ENCODE measurements at regions of chr12 and their contacts with region 1.

Region 1: GRCh38 chr12:116708826-116709756 is 28.8 kb downstream of the SPRING1 start:
- DNase-seq: no peak
- H3K4me3 ChIP-seq: no peak overlapping the region
- H3K27ac ChIP-seq: no peak overlapping the region
- H3K4me1 ChIP-seq: peaks cover 0 to 14% (median 12%) of the 10 kb centered on the region in 4 donors
- H3K27me3 ChIP-seq: peaks cover 0 to 10% (median 0%) of the 10 kb centered on the region in 3 donors
- CTCF ChIP-seq: peak in 3 of 4 experiments; percentile 24 to 42 (median 35)
- EP300 ChIP-seq: no peak
- POLR2A ChIP-seq: no peak

Region 2: GRCh38 chr12:115998119-115998633 is 710.9 kb before region 1 on chr12:
- intact Hi-C with region 1: loop called (anchors 5 kb)
- DNase-seq: no peak
- H3K4me3 ChIP-seq: no peak overlapping the region
- H3K27ac ChIP-seq: peak overlapping the region in 3 of 4 donors; percentile 49 to 59 (median 59)
- H3K4me1 ChIP-seq: peaks cover 0 to 23% (median 16%) of the 10 kb centered on the region in 4 donors
- H3K27me3 ChIP-seq: no peaks in the 10 kb centered on the region
- CTCF ChIP-seq: peak; percentile 52 to 88 (median 70)
- EP300 ChIP-seq: no peak
- POLR2A ChIP-seq: no peak

Region 3: GRCh38 chr12:116784238-116784612 is 75.1 kb after region 1 on chr12:
- intact Hi-C with region 1: no loop called
- DNase-seq: no peak
- H3K4me3 ChIP-seq: no peak overlapping the region
- H3K27ac ChIP-seq: no peak overlapping the region
- H3K4me1 ChIP-seq: no peaks in the 10 kb centered on the region
- H3K27me3 ChIP-seq: no peaks in the 10 kb centered on the region
- CTCF ChIP-seq: no peak
- EP300 ChIP-seq: no peak
- POLR2A ChIP-seq: no peak

Measured in sigmoid colon (tissue), 7 donors.